AG04450 (cell line): ENCODE measurements at regions of chr5 and their contacts with region 1.

Region 1: GRCh38 chr5:160021831-160022446 is 13.0 kb downstream of the TTC1 start:
- DNase-seq: peak; percentile 55
- H3K4me3 ChIP-seq: no peak overlapping the region
- H3K27ac ChIP-seq: no peak overlapping the region
- H3K27me3 ChIP-seq: no peaks in the 10 kb centered on the region
- CTCF ChIP-seq: peak; percentile 76

Region 2: GRCh38 chr5:159444441-159445082 is 577.4 kb before region 1 on chr5:
- CTCF ChIA-PET with region 1: interaction called, 22 read pairs
- POLR2A ChIA-PET with region 1: no interaction called
- DNase-seq: peak; percentile 23
- H3K4me3 ChIP-seq: no peak overlapping the region
- H3K27ac ChIP-seq: no peak overlapping the region
- H3K27me3 ChIP-seq: no peaks in the 10 kb centered on the region
- CTCF ChIP-seq: peak; percentile 57

Region 3: GRCh38 chr5:159905496-159905895 is 116.4 kb before region 1 on chr5:
- CTCF ChIA-PET with region 1: no interaction called
- POLR2A ChIA-PET with region 1: no interaction called
- DNase-seq: peak; percentile 39
- H3K4me3 ChIP-seq: no peak overlapping the region
- H3K27ac ChIP-seq: no peak overlapping the region
- H3K27me3 ChIP-seq: no peaks in the 10 kb centered on the region
- CTCF ChIP-seq: no peak

Region 4: GRCh38 chr5:160039810-160040470 is 18.0 kb after region 1 on chr5:
- CTCF ChIA-PET with region 1: interaction called, 22 read pairs
- POLR2A ChIA-PET with region 1: no interaction called
- DNase-seq: no peak
- H3K4me3 ChIP-seq: no peak overlapping the region
- H3K27ac ChIP-seq: no peak overlapping the region
- H3K27me3 ChIP-seq: no peaks in the 10 kb centered on the region
- CTCF ChIP-seq: no peak

Region 5: DNA sequence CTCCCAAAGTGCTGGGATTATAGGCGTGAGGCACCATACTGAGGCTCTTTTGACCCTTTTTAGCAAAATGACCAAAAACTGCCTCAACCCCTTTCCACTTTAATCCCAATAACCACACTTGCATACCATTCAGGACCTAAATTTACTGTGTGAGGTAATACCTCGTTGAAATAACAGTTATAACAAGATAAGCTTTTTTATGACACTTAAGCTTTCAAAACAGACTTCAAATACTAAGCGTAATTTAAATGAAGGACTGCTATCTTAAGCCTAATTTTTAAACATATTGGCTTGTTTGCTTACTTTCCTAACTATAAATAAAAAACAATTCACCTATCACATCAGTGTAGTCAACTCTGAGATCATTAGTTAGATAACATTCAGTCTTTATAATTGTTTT is 59.6 kb after region 1 on chr5:
- CTCF ChIA-PET with region 1: interaction called, 13 read pairs
- POLR2A ChIA-PET with region 1: no interaction called
- DNase-seq: no peak
- H3K4me3 ChIP-seq: no peak overlapping the region
- H3K27ac ChIP-seq: no peak overlapping the region
- H3K27me3 ChIP-seq: no peaks in the 10 kb centered on the region
- CTCF ChIP-seq: no peak

Region 6: DNA sequence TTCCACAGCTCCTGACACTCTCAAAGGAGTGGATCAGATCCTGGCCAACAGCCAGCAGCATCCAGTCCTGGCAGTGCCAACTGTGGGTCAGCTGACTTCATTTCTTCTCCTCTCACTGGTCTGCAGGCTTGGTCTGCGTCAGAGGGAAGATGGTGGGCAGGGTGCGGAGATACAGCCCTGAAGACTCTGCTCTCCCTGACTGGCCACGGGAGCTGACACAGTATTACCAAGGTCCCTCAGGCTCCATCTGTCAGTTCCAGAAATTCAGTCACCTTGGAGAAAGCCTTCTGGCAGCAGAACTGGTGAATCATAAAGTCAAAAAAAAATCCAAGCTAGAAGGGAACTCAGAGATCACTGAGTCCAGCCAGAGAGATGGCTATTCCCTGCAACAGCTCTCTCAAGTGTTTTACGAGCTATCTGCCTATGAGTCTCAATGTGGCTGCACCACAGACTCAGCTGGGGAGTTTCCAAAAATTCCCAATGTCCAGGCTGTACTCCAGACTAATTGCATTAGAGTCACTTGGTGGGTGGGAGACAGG is 320.5 kb after region 1 on chr5:
- CTCF ChIA-PET with region 1: interaction called, 190 read pairs
- POLR2A ChIA-PET with region 1: no interaction called
- DNase-seq: no peak
- H3K4me3 ChIP-seq: no peak overlapping the region
- H3K27ac ChIP-seq: no peak overlapping the region
- H3K27me3 ChIP-seq: no peaks in the 10 kb centered on the region
- CTCF ChIP-seq: no peak

Region 7: DNA sequence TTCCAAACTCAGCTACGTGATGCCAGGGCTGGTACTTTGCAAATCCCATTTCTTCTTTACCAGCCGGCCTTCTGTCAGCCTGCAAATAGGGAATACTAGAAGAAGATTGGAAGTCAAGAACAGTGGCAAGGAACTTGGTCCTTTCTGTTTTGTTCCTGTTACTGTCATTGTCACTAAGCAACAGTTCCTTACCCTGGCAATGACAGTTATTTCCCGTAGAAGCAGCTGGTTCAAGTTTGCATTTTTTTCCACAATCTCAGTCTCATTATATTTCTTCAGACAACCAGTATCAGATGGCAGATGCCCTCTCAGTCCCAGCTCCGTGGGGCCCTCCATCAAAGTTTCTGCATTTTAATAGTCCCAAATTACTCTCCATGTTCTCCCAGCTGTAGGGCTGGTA is 357.6 kb after region 1 on chr5:
- CTCF ChIA-PET with region 1: interaction called, 23 read pairs
- POLR2A ChIA-PET with region 1: no interaction called
- DNase-seq: no peak
- H3K4me3 ChIP-seq: no peak overlapping the region
- H3K27ac ChIP-seq: no peak overlapping the region
- H3K27me3 ChIP-seq: peaks cover 6% of the 10 kb centered on the region
- CTCF ChIP-seq: no peak

Region 8: DNA sequence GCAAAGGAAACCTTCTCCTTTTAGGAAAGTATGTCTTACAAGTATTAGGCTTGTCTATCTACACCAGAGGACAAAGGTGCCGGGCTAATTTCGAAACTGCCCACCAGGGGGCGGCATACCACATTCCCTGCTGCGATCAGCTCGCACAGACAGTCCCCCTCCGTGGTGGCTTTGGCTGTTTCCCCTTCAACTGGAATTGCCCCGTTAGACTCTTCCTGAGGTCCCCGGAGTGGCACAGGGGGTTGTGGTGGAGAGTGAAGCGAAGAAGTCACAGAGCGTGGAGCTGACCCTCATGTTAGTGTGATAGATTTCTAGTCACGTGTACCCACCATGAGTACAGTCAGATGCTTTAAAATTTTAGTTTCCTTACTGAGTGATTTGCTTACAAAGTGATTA is 417.3 kb after region 1 on chr5:
- CTCF ChIA-PET with region 1: interaction called, 11 read pairs
- POLR2A ChIA-PET with region 1: no interaction called
- DNase-seq: peak; percentile 44
- H3K4me3 ChIP-seq: peak overlapping the region; percentile 60
- H3K27ac ChIP-seq: no peak overlapping the region
- H3K27me3 ChIP-seq: peaks cover 7% of the 10 kb centered on the region
- CTCF ChIP-seq: peak; percentile 95